Upper lobe of right lung (tissue), 1 donor: ENCODE measurements at regions of chr18 and their contacts with region 1.

Region 1: GRCh38 chr18:22428672-22429071 is 11.0 kb upstream of the CTAGE1 start:
- DNase-seq: no peak
- ATAC-seq: no peak
- H3K4me3 ChIP-seq: no peak overlapping the region
- H3K27ac ChIP-seq: no peak overlapping the region
- H3K4me1 ChIP-seq: peaks cover 6% of the 10 kb centered on the region
- H3K27me3 ChIP-seq: no peaks in the 10 kb centered on the region
- CTCF ChIP-seq: no peak

Region 2: DNA sequence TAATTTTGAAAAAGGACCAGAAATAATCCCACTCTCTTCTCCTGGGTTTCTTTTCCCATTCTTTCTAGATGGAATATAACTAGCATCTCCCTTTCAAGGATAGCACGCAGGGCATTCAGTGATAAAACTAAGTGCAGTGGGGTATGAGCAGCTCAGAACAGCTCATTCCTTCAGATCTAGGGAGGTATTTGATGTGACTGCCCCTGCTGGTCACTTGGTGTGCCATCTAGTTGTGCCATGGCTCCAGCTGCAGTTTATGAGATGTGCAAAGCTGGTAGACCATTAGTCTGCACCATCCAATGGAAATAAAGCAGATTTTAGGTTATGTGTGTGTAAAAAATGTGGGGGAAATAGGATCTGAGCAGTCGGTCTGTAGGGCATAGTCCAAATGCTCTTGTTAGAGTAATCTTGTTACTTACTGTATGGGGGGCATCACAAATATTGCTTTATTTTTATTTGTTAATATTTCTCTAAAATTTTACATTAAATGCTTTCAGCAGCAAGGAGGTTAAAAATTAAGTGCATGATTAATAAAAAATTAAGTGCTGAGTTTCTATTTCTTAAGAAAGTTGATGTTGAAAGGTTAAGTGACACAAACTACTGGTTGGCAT is 49.9 kb before region 1 on chr18:
- intact Hi-C with region 1: loop called (anchors 5 kb)
- DNase-seq: no peak
- ATAC-seq: peak; percentile 90
- H3K4me3 ChIP-seq: no peak overlapping the region
- H3K27ac ChIP-seq: no peak overlapping the region
- H3K4me1 ChIP-seq: no peaks in the 10 kb centered on the region
- H3K27me3 ChIP-seq: no peaks in the 10 kb centered on the region
- CTCF ChIP-seq: peak; percentile 60